ENCODE measurements at regions of chr10 and their contacts with region 1.

Region 1: DNA sequence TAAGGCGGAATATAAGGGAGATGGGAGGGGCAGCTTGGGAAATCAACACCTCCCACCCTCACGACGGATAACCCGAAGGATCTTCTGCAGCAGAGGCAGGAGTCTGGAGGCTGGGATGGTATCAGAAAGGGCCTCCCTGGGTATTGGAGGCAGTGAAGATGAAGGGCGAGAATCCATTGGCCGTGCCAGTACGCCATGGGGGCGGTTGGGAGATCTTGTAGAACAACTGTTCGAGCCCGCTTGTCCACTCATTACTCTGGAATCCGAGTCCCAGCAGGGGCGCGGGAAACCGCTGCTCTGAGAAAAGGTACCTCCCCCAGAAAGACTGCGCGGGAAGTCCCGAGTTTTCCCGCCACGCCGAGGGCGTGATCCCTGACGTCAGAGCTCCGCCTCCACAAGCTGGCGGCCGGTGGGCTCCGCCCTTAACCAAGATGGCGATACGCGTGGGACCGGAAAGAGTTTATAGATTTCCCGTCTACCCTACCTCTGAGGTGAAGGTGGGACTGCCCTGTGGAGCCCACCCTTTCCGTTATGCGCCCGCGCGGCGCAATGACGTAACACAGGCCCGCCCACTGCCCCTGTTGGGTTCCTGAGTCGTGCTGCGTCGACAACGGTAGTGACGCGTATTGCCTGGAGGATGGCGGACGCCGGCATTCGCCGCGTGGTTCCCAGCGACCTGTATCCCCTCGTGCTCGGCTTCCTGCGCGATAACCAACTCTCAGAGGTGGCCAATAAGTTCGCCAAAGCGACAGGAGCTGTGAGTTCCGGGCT is at the start of gene NOLC1:
- DNase-seq: peak; percentile 97
- ATAC-seq: peak; percentile 88
- H3K4me3 ChIP-seq: peak within 1 kb of the TSS; percentile 82 to 97 (median 82)
- H3K27ac ChIP-seq: peak within 1 kb of the TSS; percentile 87
- H3K4me1 ChIP-seq: peaks cover 35% of the 10 kb centered on the region
- H3K27me3 ChIP-seq: no peaks in the 10 kb centered on the region; a peak in 1 of 5 replicates
- CTCF ChIP-seq: peak; percentile 24; the same call in 1 of the 2 replicates
- EP300 ChIP-seq: peak; percentile 46 to 62; a peak in 3 of 4 replicates
- POLR2A ChIP-seq: peak; percentile 94 to 96
- RAD21 ChIP-seq: peak; percentile 7; the same call in 1 of the 2 replicates
- total RNA-seq, gene NOLC1: 81.0 and 102 TPM in 2 replicates

Region 2: GRCh38 chr10:102132563-102133372 is 19.2 kb before region 1 on chr10 and contains the start of gene PPRC1:
- CTCF ChIA-PET with region 1: no interaction called
- POLR2A ChIA-PET with region 1: interaction called, 8 read pairs
- in situ Hi-C with region 1: no loop called
- intact Hi-C with region 1: loop called (anchors 1 kb)
- DNase-seq: peak; percentile 98
- ATAC-seq: peak; percentile 93
- H3K4me3 ChIP-seq: peak within 1 kb of the TSS; percentile 82 to 96 (median 92)
- H3K27ac ChIP-seq: peak within 1 kb of the TSS; percentile 88
- H3K4me1 ChIP-seq: peaks cover 41% of the 10 kb centered on the region
- H3K27me3 ChIP-seq: peaks cover 0 to 4% of the 10 kb centered on the region in 2 experiments; a peak in 1 of 5 replicates
- CTCF ChIP-seq: peak; percentile 93
- EP300 ChIP-seq: 0 out of 4 replicates have a peak, but pooled peaks of 1 of the 2 experiments have one; percentile 11
- POLR2A ChIP-seq: peak; percentile 79 to 82
- RAD21 ChIP-seq: peak; percentile 67
- total RNA-seq, gene PPRC1: 19.0 and 24.2 TPM in 2 replicates

Region 3: GRCh38 chr10:102140928-102141540 is 10.9 kb before region 1 on chr10:
- CTCF ChIA-PET with region 1: no interaction called
- POLR2A ChIA-PET with region 1: interaction called, 11 read pairs
- in situ Hi-C with region 1: no loop called
- intact Hi-C with region 1: no loop called
- DNase-seq: no peak
- ATAC-seq: peak; percentile 8
- H3K4me3 ChIP-seq: no peak overlapping the region
- H3K27ac ChIP-seq: no peak overlapping the region
- H3K4me1 ChIP-seq: peaks cover 3% of the 10 kb centered on the region
- H3K27me3 ChIP-seq: no peaks in the 10 kb centered on the region
- CTCF ChIP-seq: no peak
- EP300 ChIP-seq: no peak
- POLR2A ChIP-seq: no peak
- RAD21 ChIP-seq: no peak

Region 4: GRCh38 chr10:102322914-102323313 is 171.0 kb after region 1 on chr10:
- CTCF ChIA-PET with region 1: no interaction called
- POLR2A ChIA-PET with region 1: no interaction called
- in situ Hi-C with region 1: no loop called
- intact Hi-C with region 1: no loop called
- DNase-seq: no peak
- ATAC-seq: no peak
- H3K4me3 ChIP-seq: no peak overlapping the region
- H3K27ac ChIP-seq: no peak overlapping the region
- H3K4me1 ChIP-seq: peaks cover 14% of the 10 kb centered on the region
- H3K27me3 ChIP-seq: no peaks in the 10 kb centered on the region
- CTCF ChIP-seq: no peak
- EP300 ChIP-seq: no peak
- POLR2A ChIP-seq: no peak
- RAD21 ChIP-seq: no peak

Measured in HepG2 (cell line).